ENCODE measurements at regions of chr19 and their contacts with region 1.

Region 1: GRCh38 chr19:4638828-4639530 is at the start of gene TNFAIP8L1:
- DNase-seq: peak; percentile 96 to 99 (median 98)
- H3K4me3 ChIP-seq: peak within 1 kb of the TSS; percentile 69 to 100 (median 95)
- H3K27ac ChIP-seq: peak within 1 kb of the TSS; percentile 74 to 91
- H3K4me1 ChIP-seq: peaks cover 0 to 66% (median 54%) of the 10 kb centered on the region in 4 experiments
- H3K27me3 ChIP-seq: no peaks in the 10 kb centered on the region

Region 2: GRCh38 chr19:4567584-4568071 is 71.4 kb before region 1 on chr19:
- CTCF ChIA-PET with region 1: interaction called, 46 read pairs
- POLR2A ChIA-PET with region 1: interaction called, 6 read pairs
- DNase-seq: peak in 2 of 3 donors; percentile 47 to 61
- H3K4me3 ChIP-seq: no peak overlapping the region
- H3K27ac ChIP-seq: no peak overlapping the region
- H3K4me1 ChIP-seq: peaks cover 0 to 12% (median 5%) of the 10 kb centered on the region in 4 experiments
- H3K27me3 ChIP-seq: no peaks in the 10 kb centered on the region

Region 3: GRCh38 chr19:4576016-4576933 is 62.7 kb before region 1 on chr19:
- CTCF ChIA-PET with region 1: interaction called, 46 read pairs
- POLR2A ChIA-PET with region 1: interaction called, 6 read pairs
- DNase-seq: peak; percentile 54 to 70 (median 62)
- H3K4me3 ChIP-seq: no peak overlapping the region
- H3K27ac ChIP-seq: no peak overlapping the region
- H3K4me1 ChIP-seq: peaks cover 0 to 13% (median 9%) of the 10 kb centered on the region in 4 experiments
- H3K27me3 ChIP-seq: peaks cover 0 to 69% (median 8%) of the 10 kb centered on the region in 5 experiments

Region 4: GRCh38 chr19:4589579-4590410 is 49.2 kb before region 1 on chr19:
- CTCF ChIA-PET with region 1: interaction called, 37 read pairs
- POLR2A ChIA-PET with region 1: interaction called, 4 read pairs
- DNase-seq: peak; percentile 44 to 66 (median 63)
- H3K4me3 ChIP-seq: no peak overlapping the region
- H3K27ac ChIP-seq: no peak overlapping the region
- H3K4me1 ChIP-seq: peaks cover 0 to 6% (median 3%) of the 10 kb centered on the region in 4 experiments
- H3K27me3 ChIP-seq: peaks cover 0 to 30% (median 11%) of the 10 kb centered on the region in 5 experiments

Region 5: GRCh38 chr19:4597975-4598671 is 40.9 kb before region 1 on chr19:
- CTCF ChIA-PET with region 1: interaction called, 37 read pairs
- POLR2A ChIA-PET with region 1: interaction called, 4 read pairs
- DNase-seq: peak; percentile 83 to 92 (median 90)
- H3K4me3 ChIP-seq: peak overlapping the region; percentile 22 to 71 (median 48)
- H3K27ac ChIP-seq: no peak overlapping the region
- H3K4me1 ChIP-seq: peaks cover 0 to 17% (median 16%) of the 10 kb centered on the region in 4 experiments
- H3K27me3 ChIP-seq: peaks cover 0 to 30% (median 7%) of the 10 kb centered on the region in 5 experiments

Measured in common myeloid progenitor, CD34-positive (primary cell).